ENCODE measurements at regions of chr12 and their contacts with region 1.

Region 1: GRCh38 chr12:1583421-1584078 is 10.8 kb downstream of the FBXL14 start:
- DNase-seq: peak; percentile 75
- ATAC-seq: peak; percentile 84
- H3K4me3 ChIP-seq: no peak overlapping the region
- H3K27ac ChIP-seq: no peak overlapping the region
- H3K4me1 ChIP-seq: peaks cover 2 to 4% of the 10 kb centered on the region in 2 experiments; a peak in 1 of 4 replicates
- H3K27me3 ChIP-seq: no peaks in the 10 kb centered on the region
- CTCF ChIP-seq: peak; percentile 75 to 91 (median 77)
- POLR2A ChIP-seq: no peak
- RAD21 ChIP-seq: peak; percentile 92

Region 2: DNA sequence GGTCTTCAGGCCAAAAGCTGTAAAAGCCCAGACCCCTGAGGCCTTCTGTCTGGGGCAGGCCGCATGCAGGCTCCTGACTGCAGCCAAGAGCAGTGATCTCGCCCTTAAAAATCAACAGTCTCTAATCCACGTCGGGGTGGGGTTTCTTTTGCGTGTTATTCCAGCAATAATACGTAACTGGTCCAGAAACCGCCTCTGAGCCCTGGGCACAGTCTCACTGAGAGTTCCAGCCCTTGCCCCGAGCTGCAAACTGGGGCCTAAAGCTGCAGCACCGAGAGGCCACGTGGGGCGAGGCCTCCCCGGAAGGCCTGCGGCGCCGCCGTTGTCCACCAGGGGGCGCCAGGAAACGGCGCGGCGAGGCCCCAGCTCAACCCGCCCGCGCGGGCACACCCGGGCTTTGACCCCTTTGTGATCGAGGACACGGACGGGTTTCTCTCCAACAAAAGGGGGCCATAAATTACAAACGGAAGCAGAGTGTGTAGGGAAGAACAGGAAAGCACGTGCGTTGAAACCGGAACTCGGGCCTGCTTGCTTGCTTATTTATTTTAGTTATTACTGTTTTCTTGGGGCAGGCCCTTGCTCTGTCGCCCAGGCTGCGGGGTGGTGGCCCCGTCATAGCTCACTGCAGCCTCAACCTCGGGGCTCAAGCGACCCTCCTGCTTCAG is 1007.5 kb before region 1 on chr12:
- CTCF ChIA-PET with region 1: interaction called, 19 read pairs
- POLR2A ChIA-PET with region 1: no interaction called
- RAD21 ChIA-PET with region 1: interaction called in 1 of 2 experiments, 6 read pairs
- intact Hi-C with region 1: loop called (anchors 2 kb)
- DNase-seq: peak; percentile 41
- ATAC-seq: peak; percentile 72
- H3K4me3 ChIP-seq: no peak overlapping the region
- H3K27ac ChIP-seq: peak overlapping the region; percentile 31
- H3K4me1 ChIP-seq: peaks cover 33 to 52% of the 10 kb centered on the region in 2 experiments
- H3K27me3 ChIP-seq: no peaks in the 10 kb centered on the region
- CTCF ChIP-seq: peak in 2 of 3 experiments; percentile 94 to 98; a peak in 4 of 6 replicates
- POLR2A ChIP-seq: no peak
- RAD21 ChIP-seq: no peak

Region 3: DNA sequence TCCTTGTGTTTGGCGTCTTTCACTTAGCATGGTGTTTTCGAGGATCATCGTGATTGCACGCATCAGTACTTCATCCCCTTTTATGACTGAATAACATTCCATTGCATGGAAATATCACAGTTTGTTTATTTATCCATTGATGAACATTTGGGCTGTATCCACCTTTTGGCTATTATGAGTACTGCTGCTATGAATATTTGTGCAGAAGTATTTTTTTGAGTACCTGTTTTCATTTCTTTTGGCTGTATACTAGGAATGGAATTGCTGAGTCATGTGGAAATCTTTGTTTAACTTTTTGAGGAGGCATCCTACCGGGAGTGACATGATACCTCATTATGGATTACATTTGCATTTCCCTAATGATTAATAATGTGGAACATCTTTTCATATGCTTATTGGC is 764.8 kb before region 1 on chr12:
- CTCF ChIA-PET with region 1: interaction called, 5 read pairs
- POLR2A ChIA-PET with region 1: no interaction called
- RAD21 ChIA-PET with region 1: no interaction called
- intact Hi-C with region 1: loop called (anchors 2 kb)
- DNase-seq: no peak
- ATAC-seq: no peak
- H3K4me3 ChIP-seq: no peak overlapping the region
- H3K27ac ChIP-seq: no peak overlapping the region
- H3K4me1 ChIP-seq: peaks cover 4 to 11% of the 10 kb centered on the region in 2 experiments; a peak in 3 of 4 replicates
- H3K27me3 ChIP-seq: no peaks in the 10 kb centered on the region
- CTCF ChIP-seq: peak in 1 of 3 experiments; percentile 29; a peak in 1 of 6 replicates
- POLR2A ChIP-seq: no peak
- RAD21 ChIP-seq: no peak

Region 4: DNA sequence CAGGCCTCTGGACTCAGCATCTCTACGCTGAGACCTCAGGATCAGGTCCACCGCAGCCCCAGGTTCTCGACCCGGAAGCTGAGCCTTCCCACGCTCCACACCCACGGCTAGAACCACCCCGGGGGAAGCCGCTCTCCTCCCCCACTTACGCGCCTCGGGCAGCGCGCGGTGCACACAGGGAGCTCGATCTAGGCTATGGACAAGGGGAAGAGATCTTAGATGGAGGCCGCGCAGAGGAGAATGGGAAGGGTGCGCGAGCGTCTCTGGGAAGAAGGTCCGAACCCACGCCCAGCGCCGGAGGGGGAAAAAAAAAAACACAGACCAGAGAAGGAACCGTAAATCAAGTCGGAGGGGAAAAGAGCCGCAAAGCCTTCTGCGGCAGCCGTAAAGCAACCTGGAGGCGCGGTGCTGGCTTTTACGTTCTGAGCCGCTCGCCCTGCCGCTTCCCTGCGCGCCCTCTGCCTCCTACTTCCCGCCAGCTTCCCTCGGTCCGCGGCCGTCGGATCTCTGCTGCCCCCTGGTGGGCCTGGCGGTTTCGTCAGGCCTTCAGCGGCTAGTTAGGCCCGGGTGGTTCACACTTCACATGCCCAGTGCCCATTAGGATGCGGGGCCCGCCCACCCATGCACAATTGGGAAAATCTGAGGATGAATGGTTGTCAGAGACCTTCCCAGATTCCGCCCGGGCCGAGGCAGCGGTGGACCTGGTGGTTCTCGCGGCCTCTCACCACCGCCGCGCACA is 633.9 kb before region 1 on chr12 and contains the start of gene RAD52:
- CTCF ChIA-PET with region 1: interaction called, 9 read pairs
- POLR2A ChIA-PET with region 1: no interaction called
- RAD21 ChIA-PET with region 1: interaction called in 1 of 2 experiments, 3 read pairs
- intact Hi-C with region 1: loop called (anchors 5 kb)
- DNase-seq: peak; percentile 97
- ATAC-seq: peak; percentile 93
- H3K4me3 ChIP-seq: peak within 1 kb of the TSS; percentile 57 to 94
- H3K27ac ChIP-seq: peak within 1 kb of the TSS; percentile 86
- H3K4me1 ChIP-seq: peaks cover 5 to 14% of the 10 kb centered on the region in 2 experiments
- H3K27me3 ChIP-seq: no peaks in the 10 kb centered on the region
- CTCF ChIP-seq: peak; percentile 92 to 98 (median 95)
- POLR2A ChIP-seq: peak; percentile 91
- RAD21 ChIP-seq: peak; percentile 90
- total RNA-seq, gene RAD52: 24.4 TPM